Activated CD8-positive, alpha-beta T cell treated with anti-CD3 and anti-CD28 coated beads for 36 hours (primary cell): ENCODE measurements at regions of chr10 and their contacts with region 1.

Region 1: DNA sequence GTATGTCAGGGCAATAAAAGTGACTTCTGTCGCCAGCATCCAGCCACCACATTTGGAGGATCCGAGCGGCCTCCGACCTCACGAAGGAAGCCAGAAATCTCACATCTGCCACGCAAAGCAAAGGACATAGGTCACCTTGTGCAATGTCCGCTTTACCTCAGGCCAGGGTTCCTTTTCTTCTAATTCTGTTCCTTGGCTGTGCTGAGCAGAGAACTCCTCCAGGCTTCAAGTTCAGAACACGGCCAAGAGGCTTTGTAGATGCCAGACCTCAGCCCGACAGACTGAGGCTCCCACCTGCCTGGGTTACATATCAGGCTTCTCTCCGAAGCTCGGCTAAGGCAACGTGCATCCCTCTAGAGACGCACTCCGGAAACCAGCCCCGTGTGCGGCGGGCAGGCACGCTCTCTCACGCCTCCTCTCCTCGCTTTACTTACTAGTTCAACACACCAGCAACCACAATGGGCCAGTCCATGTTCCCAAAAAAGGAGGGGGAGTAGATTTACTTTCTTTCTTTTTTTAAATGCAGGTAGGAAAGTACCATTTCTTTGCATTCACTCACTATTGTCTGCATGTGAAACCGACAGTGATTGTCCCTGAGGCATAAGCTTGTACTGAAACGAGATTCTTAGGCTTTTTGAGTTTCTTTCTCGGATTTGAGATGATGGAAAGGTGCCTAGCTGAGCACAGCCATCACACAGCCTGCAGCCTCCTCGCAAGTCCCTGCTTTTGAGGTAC is 122.4 kb upstream of the AFAP1L2 start:
- DNase-seq: peak; percentile 97
- ATAC-seq: peak; percentile 91
- H3K4me3 Mint-ChIP-seq: peak overlapping the region; percentile 87
- H3K27ac Mint-ChIP-seq: peak overlapping the region; percentile 93
- H3K4me1 Mint-ChIP-seq: peaks cover 51% of the 10 kb centered on the region
- H3K27me3 Mint-ChIP-seq: no peaks in the 10 kb centered on the region
- CTCF ChIP-seq: no peak

Region 2: GRCh38 chr10:114453576-114453975 is 73.1 kb before region 1 on chr10:
- CTCF ChIA-PET with region 1: no interaction called
- POLR2A ChIA-PET with region 1: no interaction called
- intact Hi-C with region 1: no loop called
- DNase-seq: no peak
- ATAC-seq: no peak
- H3K4me3 Mint-ChIP-seq: no peak overlapping the region
- H3K27ac Mint-ChIP-seq: no peak overlapping the region
- H3K4me1 Mint-ChIP-seq: peaks cover 13% of the 10 kb centered on the region
- H3K27me3 Mint-ChIP-seq: no peaks in the 10 kb centered on the region
- CTCF ChIP-seq: no peak

Region 3: GRCh38 chr10:114492351-114493037 is 34.2 kb before region 1 on chr10:
- CTCF ChIA-PET with region 1: interaction called, 14 read pairs
- POLR2A ChIA-PET with region 1: interaction called, 138 read pairs
- intact Hi-C with region 1: loop called (anchors 5 kb)
- DNase-seq: peak; percentile 82
- ATAC-seq: peak; percentile 59
- H3K4me3 Mint-ChIP-seq: peak overlapping the region; percentile 52
- H3K27ac Mint-ChIP-seq: peak overlapping the region; percentile 85
- H3K4me1 Mint-ChIP-seq: peaks cover 85% of the 10 kb centered on the region
- H3K27me3 Mint-ChIP-seq: no peaks in the 10 kb centered on the region
- CTCF ChIP-seq: no peak

Region 4: GRCh38 chr10:114504769-114505579 is 21.7 kb before region 1 on chr10:
- CTCF ChIA-PET with region 1: interaction called, 35 read pairs
- POLR2A ChIA-PET with region 1: interaction called, 138 read pairs
- intact Hi-C with region 1: no loop called
- DNase-seq: no peak
- ATAC-seq: peak; percentile 17
- H3K4me3 Mint-ChIP-seq: no peak overlapping the region
- H3K27ac Mint-ChIP-seq: peak overlapping the region; percentile 69
- H3K4me1 Mint-ChIP-seq: peaks cover 91% of the 10 kb centered on the region
- H3K27me3 Mint-ChIP-seq: no peaks in the 10 kb centered on the region
- CTCF ChIP-seq: no peak

Region 5: DNA sequence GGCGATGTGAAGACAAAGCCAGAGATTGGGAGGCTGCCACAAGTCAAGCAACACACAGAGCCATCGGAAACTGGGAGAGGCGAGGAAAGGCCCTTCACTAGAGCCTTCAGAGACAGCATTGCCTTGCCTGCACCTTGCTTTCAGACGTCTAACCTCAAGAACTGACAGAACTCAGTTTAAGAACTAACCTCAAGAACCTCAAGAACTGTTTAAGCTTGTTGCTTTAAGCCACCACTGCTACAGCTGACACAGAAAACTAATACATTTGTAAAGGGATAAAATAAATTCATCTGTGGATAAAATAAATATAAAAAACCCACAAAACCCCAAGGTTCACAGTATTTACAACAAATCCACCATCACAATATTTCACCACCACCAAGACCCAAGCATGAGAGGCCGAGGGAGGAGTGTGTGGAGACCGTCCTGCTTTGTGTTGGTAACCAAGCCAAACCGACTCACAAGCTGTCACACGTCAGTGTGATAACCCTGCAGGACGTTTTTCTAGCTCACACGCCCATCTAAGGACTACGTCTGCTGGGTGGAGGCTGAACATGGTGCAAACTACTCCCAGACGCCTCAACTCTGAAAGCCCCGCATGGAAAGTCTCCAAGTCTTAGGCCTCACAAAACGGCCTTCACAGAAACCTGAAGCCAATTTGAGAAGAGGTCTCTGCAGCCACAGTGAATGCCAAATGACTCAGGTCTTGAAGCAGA is 14.6 kb after region 1 on chr10:
- CTCF ChIA-PET with region 1: interaction called, 252 read pairs
- POLR2A ChIA-PET with region 1: interaction called, 251 read pairs
- intact Hi-C with region 1: loop called (anchors 1 kb)
- DNase-seq: peak; percentile 89
- ATAC-seq: peak; percentile 83
- H3K4me3 Mint-ChIP-seq: peak overlapping the region; percentile 70
- H3K27ac Mint-ChIP-seq: peak overlapping the region; percentile 100
- H3K4me1 Mint-ChIP-seq: peaks cover 87% of the 10 kb centered on the region
- H3K27me3 Mint-ChIP-seq: no peaks in the 10 kb centered on the region
- CTCF ChIP-seq: no peak